ENCODE measurements at regions of chrX and their contacts with region 1.

Region 1: GRCh38 chrX:75596178-75596577 is 73.3 kb upstream of the ZDHHC15 start:
- DNase-seq: no peak
- ATAC-seq: peak; percentile 91

Region 2: GRCh38 chrX:74614093-74614909 is 981.9 kb before region 1 on chrX and contains the start of gene RLIM:
- intact Hi-C with region 1: loop called (anchors 5 kb)
- DNase-seq: peak; percentile 95
- ATAC-seq: peak; percentile 100
- total RNA-seq, gene RLIM: 20.1 TPM

Region 3: DNA sequence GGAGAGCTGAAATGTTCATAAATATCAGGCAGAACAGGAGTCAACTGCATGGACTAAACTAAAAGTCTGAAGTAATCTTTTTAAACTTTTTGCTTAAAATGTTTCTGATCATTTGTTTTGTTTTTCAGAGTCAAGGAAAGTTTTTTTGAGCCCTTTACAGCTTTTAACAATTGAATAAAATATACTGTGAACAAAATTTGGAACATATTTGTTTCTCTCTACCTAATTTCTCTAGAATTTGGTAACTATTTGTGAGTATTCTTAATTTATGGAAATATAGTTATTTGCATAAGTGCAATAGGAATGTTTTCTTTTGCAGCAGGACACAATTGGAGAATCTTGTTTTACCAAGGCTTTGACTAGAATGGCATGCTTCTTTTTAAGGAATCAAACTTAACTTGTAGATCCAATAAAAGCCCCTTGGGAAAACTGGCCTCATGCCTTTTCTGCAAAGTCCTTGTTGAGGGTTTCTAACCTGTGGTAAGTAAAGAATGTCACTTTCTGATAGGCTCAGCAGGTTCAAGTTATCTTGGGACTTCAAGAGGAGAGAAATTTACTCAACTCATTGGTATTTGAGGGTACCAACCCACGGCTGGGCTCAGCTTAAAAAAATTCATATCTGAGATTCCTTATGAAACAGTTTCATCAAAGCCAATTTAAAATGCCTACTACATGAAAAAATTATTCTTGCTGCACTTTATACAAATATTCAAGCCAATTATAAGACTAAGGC is 230.8 kb before region 1 on chrX:
- intact Hi-C with region 1: no loop called
- DNase-seq: no peak
- ATAC-seq: no peak

Region 4: DNA sequence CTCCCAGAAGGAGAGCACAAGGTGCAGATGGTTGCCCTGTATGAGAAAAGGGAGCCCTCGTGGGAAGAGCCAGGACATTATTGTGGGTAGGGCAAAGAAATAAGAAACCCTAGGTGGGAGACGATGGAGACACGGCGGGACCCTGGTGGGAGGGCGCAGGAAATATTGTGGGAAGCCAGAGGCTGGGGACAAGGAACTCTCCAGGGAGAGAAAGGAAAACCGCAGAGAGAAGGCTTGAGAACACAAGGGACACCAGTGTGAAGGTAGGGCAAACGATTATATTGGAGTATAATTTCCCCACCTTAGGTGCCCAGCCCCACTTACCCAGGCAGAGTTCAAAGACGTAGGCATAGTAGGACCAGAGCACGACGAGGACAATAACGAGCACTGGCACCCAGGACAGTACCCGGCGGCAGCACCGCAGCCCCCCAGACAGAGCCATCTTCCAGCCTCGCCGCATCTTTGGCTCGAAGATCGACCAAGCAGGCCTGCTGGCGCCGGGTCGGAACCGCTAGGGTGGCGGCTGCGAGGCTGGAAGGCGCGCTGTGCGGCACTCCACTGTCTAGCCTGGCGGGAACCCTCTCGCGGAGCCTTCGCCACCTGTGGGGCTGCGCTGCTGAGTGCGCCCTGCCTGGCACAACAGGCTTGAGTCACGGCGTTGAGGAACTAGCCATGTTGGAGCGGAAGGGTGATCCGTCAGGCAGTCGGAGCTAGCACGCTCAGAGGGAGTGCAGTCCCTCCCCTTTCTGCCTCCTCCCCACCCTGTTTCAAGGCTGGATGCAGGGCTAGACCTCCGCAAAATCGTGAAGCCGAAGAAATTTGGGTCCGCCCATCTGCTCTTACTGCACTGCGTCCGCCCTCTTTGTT is 73.4 kb before region 1 on chrX and contains the start of gene ZDHHC15:
- intact Hi-C with region 1: loop called (anchors 5 kb)
- DNase-seq: peak; percentile 76
- ATAC-seq: peak; percentile 96
- total RNA-seq, gene ZDHHC15: 3.1 TPM

Region 5: DNA sequence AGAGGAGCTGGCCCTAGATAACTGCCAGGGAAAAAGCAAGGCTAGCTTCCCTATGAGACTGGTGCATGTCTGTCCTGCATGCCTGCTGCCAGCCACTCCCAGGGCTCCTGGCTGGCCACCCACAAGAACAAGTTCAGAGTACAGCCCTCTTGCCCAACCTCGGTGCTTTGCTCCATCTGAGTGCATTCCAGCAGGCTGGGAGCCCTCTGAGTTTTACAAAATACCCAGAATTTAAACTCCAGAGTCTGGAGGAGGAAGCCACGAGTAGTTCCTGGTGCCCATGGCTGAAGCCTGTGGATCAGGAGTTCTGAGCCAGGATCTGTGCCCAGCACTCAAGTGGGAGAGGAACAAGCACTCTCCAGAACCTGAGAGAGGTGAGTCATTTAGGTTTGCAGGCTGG is 77.3 kb after region 1 on chrX:
- intact Hi-C with region 1: no loop called
- DNase-seq: no peak
- ATAC-seq: no peak

Region 6: DNA sequence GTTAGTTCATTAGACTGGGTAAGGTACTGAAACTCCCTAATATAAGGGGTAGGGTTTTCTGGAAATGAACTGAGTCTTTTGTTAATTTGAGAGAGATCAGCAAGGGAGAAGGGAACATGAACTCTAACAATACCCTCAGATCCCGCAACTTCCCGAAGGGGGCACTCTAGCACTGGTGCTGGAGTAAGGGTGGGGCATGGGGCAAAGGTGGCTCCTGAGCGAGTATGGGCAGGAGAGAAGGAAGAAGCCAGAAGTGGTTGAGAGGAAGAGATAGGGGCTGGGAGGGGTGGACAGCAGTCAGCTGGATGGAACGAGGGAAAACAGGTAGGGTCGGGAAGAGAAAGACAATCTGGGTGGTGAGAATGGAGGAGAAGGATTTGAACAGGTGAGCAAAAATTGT is 372.1 kb after region 1 on chrX:
- intact Hi-C with region 1: no loop called
- DNase-seq: no peak
- ATAC-seq: no peak

Region 7: DNA sequence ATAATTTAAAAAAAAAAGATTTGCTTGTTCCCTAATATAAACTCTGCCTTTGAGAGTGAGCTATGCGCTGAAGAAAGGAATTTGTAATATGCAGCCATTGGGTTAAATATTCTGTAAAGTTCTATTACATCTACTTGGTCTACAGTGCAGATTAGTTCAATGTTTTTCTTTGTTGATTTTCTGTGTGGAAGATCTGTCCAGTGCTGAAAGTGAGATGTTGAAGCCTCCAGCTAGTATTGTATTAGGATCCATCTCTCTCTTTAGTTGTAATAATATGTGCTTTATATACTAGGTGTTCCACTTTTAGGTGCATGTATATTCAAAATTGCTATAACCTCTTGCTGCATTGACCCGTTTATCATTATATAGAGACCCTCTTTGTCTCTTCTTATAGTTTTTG is 881.2 kb after region 1 on chrX:
- intact Hi-C with region 1: no loop called
- DNase-seq: no peak
- ATAC-seq: no peak